GM12878 (cell line): ENCODE measurements at regions of chr16 and their contacts with region 1.

Region 1: DNA sequence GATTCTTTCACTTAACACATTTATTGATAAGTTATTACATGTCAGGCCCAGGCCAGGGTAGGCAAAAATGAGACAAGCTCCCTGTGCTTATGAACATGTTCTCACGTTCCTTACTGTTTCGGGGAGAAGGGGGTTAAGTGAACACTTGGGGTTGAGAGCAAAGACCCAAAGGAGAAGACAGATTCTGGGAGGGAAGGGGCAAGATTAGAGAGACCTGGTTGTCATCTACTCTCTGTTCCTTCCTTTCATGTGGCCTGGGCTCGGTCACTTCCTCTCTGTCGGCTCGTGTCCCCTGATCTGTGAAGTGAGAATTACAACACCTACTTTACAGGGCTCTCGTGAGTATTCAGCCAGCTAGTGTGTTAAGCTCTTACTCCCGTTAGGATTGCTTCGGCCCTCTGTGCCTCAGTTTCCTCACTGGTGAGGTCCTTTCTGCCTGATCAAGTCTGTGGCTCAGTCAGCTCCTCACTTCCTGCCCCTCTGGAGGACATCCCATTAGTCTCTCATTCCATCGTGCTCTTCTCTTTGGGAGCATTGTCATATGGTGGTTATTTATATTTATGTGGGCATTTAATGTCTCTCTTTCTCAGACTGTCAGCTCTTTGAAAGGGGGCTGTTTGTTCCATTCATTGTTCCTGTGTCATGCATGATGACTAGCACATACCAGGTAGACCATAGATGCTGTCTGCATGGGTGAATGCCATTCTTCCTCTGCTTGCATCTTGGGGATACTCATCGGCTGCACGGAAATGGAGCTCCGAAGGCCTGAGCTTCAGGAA is 38.9 kb downstream of the PLCG2 start:
- DNase-seq: peak; percentile 79
- ATAC-seq: peak; percentile 68
- H3K4me3 ChIP-seq: peak overlapping the region; percentile 38; the same call in 1 of the 2 replicates
- H3K27ac ChIP-seq: peak overlapping the region; percentile 98
- H3K4me1 ChIP-seq: peaks cover 85% of the 10 kb centered on the region
- H3K27me3 ChIP-seq: no peaks in the 10 kb centered on the region
- CTCF ChIP-seq: no peak
- EP300 ChIP-seq: peak; percentile 18 to 79; a peak in 3 of 4 replicates
- POLR2A ChIP-seq: peak; percentile 58
- RAD21 ChIP-seq: no peak; the same call in 1 of the 2 replicates

Region 2: GRCh38 chr16:81752225-81752875 is 65.6 kb before region 1 on chr16:
- CTCF ChIA-PET with region 1: interaction called, 4 read pairs
- POLR2A ChIA-PET with region 1: interaction called, 8 read pairs
- RAD21 ChIA-PET with region 1: interaction called, 19 read pairs
- SMC1A ChIA-PET with region 1: interaction called, 20 read pairs
- in situ Hi-C with region 1: no loop called
- intact Hi-C with region 1: no loop called
- DNase-seq: peak; percentile 72
- ATAC-seq: peak; percentile 97
- H3K4me3 ChIP-seq: peak overlapping the region; percentile 54; the same call in 1 of the 2 replicates
- H3K27ac ChIP-seq: peak overlapping the region; percentile 68
- H3K4me1 ChIP-seq: peaks cover 46% of the 10 kb centered on the region
- H3K27me3 ChIP-seq: no peaks in the 10 kb centered on the region
- CTCF ChIP-seq: no peak
- EP300 ChIP-seq: peak in 1 of 2 experiments; percentile 86; a peak in 3 of 4 replicates
- POLR2A ChIP-seq: peak; percentile 86
- RAD21 ChIP-seq: no peak

Region 3: DNA sequence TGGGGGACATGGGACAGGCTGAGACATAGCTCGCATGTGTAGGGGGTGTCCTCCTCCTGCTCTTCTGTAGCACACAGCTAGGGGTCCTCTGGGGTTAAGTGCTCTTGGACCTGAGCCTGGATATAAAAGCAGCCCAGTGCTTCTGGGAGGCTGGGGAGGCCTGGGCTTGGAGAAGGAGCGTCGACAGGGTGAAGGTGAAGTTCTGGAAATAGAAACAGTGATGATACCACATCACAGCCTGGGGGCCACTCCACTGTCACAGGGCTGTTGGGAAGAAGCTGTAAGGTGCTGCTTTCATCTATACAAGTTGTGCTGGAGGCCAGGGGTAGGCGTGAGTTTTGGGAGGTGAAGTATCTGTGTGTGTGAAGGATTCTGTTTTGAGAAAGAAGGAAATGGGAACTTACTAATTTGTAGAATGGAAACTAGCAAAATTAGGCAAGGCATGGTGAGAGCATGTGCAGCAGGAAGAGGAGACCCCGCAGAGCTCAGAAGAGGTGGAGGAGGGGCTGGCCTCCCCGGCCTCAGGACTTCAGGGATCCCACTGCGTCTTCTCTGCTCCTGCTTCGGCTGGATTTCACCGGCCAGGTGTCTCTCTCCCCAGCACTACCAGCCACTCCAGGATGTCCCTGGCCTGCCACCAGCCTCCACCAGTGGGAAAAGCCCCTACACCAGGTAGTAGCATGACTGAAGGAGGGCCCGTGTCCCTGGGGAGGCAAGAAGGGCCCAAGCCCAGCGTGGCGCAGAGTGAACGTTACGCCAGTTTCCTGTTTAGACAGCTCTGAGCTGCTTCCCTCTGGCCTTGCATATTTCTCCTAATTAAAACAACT is 19.5 kb before region 1 on chr16:
- CTCF ChIA-PET with region 1: interaction called, 18 read pairs
- POLR2A ChIA-PET with region 1: interaction called, 36 read pairs
- RAD21 ChIA-PET with region 1: interaction called, 62 read pairs
- SMC1A ChIA-PET with region 1: interaction called, 86 read pairs
- in situ Hi-C with region 1: no loop called
- intact Hi-C with region 1: loop called (anchors 1 kb)
- DNase-seq: peak; percentile 97
- ATAC-seq: peak; percentile 76
- H3K4me3 ChIP-seq: peak overlapping the region; percentile 62
- H3K27ac ChIP-seq: peak overlapping the region; percentile 98
- H3K4me1 ChIP-seq: peaks cover 52% of the 10 kb centered on the region
- H3K27me3 ChIP-seq: no peaks in the 10 kb centered on the region
- CTCF ChIP-seq: peak in 2 of 3 experiments; percentile 27 to 36; a peak in 4 of 6 replicates
- EP300 ChIP-seq: peak; percentile 80 to 84; a peak in 3 of 4 replicates
- POLR2A ChIP-seq: peak; percentile 50; the same call in 1 of the 2 replicates
- RAD21 ChIP-seq: no peak; the same call in 1 of the 2 replicates

Region 4: GRCh38 chr16:81838794-81839193 is 20.8 kb after region 1 on chr16:
- CTCF ChIA-PET with region 1: interaction called, 27 read pairs
- POLR2A ChIA-PET with region 1: interaction called, 29 read pairs
- RAD21 ChIA-PET with region 1: interaction called, 50 read pairs
- SMC1A ChIA-PET with region 1: interaction called, 135 read pairs
- in situ Hi-C with region 1: no loop called
- intact Hi-C with region 1: loop called (anchors 2 kb)
- DNase-seq: peak; percentile 57
- ATAC-seq: peak; percentile 64
- H3K4me3 ChIP-seq: no peak overlapping the region
- H3K27ac ChIP-seq: peak overlapping the region; percentile 54
- H3K4me1 ChIP-seq: peaks cover 87% of the 10 kb centered on the region
- H3K27me3 ChIP-seq: no peaks in the 10 kb centered on the region
- CTCF ChIP-seq: no peak
- EP300 ChIP-seq: peak; percentile 26 to 53; a peak in 2 of 4 replicates
- POLR2A ChIP-seq: peak; percentile 44; the same call in 1 of the 2 replicates
- RAD21 ChIP-seq: no peak

Region 5: GRCh38 chr16:81863630-81864352 is 45.8 kb after region 1 on chr16:
- CTCF ChIA-PET with region 1: interaction called, 4 read pairs
- POLR2A ChIA-PET with region 1: interaction called, 5 read pairs
- RAD21 ChIA-PET with region 1: interaction called, 11 read pairs
- SMC1A ChIA-PET with region 1: interaction called, 3 read pairs
- in situ Hi-C with region 1: no loop called
- intact Hi-C with region 1: no loop called
- DNase-seq: peak; percentile 43
- ATAC-seq: peak; percentile 82
- H3K4me3 ChIP-seq: peak overlapping the region; percentile 13; the same call in 1 of the 2 replicates
- H3K27ac ChIP-seq: peak overlapping the region; percentile 1; the same call in 1 of the 2 replicates
- H3K4me1 ChIP-seq: peaks cover 60% of the 10 kb centered on the region
- H3K27me3 ChIP-seq: no peaks in the 10 kb centered on the region
- CTCF ChIP-seq: 0 out of 6 replicates have a peak, but pooled peaks of 1 of the 3 experiments have one; percentile 8
- EP300 ChIP-seq: no peak
- POLR2A ChIP-seq: peak; percentile 51
- RAD21 ChIP-seq: 0 out of 2 replicates have a peak, but pooled peaks have one; percentile 1

Region 6: GRCh38 chr16:81956213-81956948 is 138.4 kb after region 1 on chr16:
- CTCF ChIA-PET with region 1: no interaction called
- POLR2A ChIA-PET with region 1: no interaction called
- RAD21 ChIA-PET with region 1: no interaction called
- SMC1A ChIA-PET with region 1: no interaction called
- in situ Hi-C with region 1: no loop called
- intact Hi-C with region 1: no loop called
- DNase-seq: no peak
- ATAC-seq: no peak
- H3K4me3 ChIP-seq: no peak overlapping the region
- H3K27ac ChIP-seq: no peak overlapping the region
- H3K4me1 ChIP-seq: no peaks in the 10 kb centered on the region
- H3K27me3 ChIP-seq: no peaks in the 10 kb centered on the region
- CTCF ChIP-seq: no peak
- EP300 ChIP-seq: no peak
- POLR2A ChIP-seq: no peak
- RAD21 ChIP-seq: no peak